ENCODE measurements at regions of chr9 and their contacts with region 1.

Region 1: GRCh38 chr9:87662808-87663528 is 63.0 kb upstream of the CTSL start:
- DNase-seq: peak; percentile 80
- ATAC-seq: peak; percentile 72

Region 2: DNA sequence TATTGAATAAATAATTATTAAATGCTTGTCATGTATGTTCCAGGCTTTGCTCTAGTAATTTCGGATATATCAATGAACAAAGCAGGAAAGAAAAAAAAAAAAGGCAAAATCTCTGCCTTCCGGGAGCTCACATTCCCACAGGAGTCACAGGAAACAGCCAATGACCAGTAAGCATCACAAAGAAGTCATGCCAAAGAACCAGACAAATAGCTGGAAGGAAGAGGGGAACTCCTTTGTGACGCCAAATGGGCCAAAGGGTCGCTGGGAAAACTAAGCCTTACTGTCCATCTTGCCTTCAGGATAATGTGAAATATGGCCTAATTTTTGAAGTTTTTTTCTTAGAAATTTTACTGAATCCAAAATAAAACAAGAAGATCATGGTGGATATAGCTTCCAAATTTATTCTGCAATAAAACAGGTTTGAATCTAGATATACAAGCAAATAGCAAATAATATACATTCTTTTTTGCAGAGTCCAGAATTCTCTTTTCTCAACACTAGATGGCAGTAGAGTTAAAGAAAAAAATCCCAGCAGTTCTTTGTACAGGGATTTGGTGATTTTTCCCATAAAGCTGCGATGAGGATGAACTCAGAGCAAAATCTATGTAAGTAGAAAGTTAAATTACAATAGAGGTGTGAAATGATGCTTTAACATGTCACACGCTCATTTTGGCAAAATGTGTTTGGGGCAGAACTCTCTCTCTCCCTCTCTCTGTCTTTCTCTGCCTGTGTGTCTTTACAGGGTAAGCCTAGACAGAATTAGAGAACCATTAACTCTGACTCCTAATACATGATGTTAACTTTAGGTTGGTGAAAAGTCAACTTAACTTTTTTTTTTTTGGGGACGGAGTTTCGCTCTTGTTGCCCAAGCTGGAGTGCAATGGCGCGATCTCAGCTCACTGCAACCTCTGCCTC is 1248.7 kb before region 1 on chr9:
- intact Hi-C with region 1: loop called (anchors 10 kb)
- DNase-seq: no peak
- ATAC-seq: no peak

Region 3: DNA sequence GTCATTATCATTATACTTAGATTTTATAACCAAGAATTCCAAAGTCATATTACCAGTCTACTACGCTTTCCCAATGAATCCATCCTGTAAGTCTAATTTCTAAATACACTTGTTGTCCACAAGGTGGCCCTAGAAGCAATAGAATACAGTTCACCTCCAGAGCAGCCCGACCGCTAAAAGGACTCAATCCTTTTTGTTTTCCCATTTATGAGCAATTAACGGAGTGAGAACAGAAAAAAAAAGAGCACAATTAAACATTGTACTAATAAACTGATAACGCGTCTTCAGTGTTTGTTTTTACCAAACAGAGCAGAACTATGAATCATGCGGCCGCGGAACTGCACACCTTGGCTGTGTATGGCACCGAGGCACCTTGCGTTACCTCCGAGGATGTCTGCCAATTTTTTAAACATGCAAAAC is 326.0 kb before region 1 on chr9:
- intact Hi-C with region 1: loop called (anchors 1 kb)
- DNase-seq: no peak
- ATAC-seq: peak; percentile 71

Measured in Right ventricle myocardium inferior (tissue), 1 donor.